ENCODE measurements at regions of chr7 and their contacts with region 1.

Region 1: GRCh38 chr7:140003913-140004382 is 58.8 kb downstream of the PARP12 start:
- DNase-seq: peak; percentile 81 to 84 (median 84)
- ATAC-seq: peak; percentile 73
- H3K4me3 ChIP-seq: no peak overlapping the region
- H3K27ac ChIP-seq: no peak overlapping the region
- H3K4me1 ChIP-seq: peaks cover 10 to 11% of the 10 kb centered on the region in 2 experiments; a peak in 4 of 5 replicates
- H3K27me3 ChIP-seq: peaks cover 0 to 9% of the 10 kb centered on the region in 2 experiments; a peak in 2 of 5 replicates
- CTCF ChIP-seq: peak; percentile 85 to 92 (median 88)
- EP300 ChIP-seq: no peak
- POLR2A ChIP-seq: no peak
- RAD21 ChIP-seq: peak; percentile 83 to 94

Region 2: DNA sequence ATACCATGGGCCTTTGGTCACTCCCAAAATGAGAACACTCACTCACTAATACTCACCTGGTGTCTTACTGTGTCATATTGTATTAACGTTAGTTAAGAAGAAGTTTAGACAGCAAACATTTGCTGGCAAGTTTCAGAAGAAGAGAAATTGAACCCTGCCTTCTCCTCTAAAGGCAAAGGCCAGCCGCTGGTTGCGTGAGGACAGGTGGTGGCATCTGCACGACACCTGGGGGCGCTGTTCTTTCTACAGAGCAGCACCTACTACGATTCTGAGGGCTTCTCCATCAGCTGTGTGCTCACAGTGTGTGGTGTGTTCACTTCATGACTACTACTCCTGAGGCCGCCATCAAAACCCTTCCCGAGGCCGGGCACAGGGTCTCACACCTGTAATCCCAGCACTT is 498.4 kb before region 1 on chr7:
- CTCF ChIA-PET with region 1: interaction called, 16 read pairs
- POLR2A ChIA-PET with region 1: no interaction called
- in situ Hi-C with region 1: loop called (anchors 5 kb)
- intact Hi-C with region 1: loop called (anchors 1 kb)
- DNase-seq: peak; percentile 66 to 76 (median 73)
- ATAC-seq: peak; percentile 95
- H3K4me3 ChIP-seq: no peak overlapping the region
- H3K27ac ChIP-seq: no peak overlapping the region
- H3K4me1 ChIP-seq: peaks cover 2 to 4% of the 10 kb centered on the region in 2 experiments; a peak in 2 of 5 replicates
- H3K27me3 ChIP-seq: peaks cover 24 to 51% of the 10 kb centered on the region in 2 experiments
- CTCF ChIP-seq: peak; percentile 85 to 91 (median 86)
- EP300 ChIP-seq: no peak
- POLR2A ChIP-seq: no peak
- RAD21 ChIP-seq: peak; percentile 29 to 84

Region 3: DNA sequence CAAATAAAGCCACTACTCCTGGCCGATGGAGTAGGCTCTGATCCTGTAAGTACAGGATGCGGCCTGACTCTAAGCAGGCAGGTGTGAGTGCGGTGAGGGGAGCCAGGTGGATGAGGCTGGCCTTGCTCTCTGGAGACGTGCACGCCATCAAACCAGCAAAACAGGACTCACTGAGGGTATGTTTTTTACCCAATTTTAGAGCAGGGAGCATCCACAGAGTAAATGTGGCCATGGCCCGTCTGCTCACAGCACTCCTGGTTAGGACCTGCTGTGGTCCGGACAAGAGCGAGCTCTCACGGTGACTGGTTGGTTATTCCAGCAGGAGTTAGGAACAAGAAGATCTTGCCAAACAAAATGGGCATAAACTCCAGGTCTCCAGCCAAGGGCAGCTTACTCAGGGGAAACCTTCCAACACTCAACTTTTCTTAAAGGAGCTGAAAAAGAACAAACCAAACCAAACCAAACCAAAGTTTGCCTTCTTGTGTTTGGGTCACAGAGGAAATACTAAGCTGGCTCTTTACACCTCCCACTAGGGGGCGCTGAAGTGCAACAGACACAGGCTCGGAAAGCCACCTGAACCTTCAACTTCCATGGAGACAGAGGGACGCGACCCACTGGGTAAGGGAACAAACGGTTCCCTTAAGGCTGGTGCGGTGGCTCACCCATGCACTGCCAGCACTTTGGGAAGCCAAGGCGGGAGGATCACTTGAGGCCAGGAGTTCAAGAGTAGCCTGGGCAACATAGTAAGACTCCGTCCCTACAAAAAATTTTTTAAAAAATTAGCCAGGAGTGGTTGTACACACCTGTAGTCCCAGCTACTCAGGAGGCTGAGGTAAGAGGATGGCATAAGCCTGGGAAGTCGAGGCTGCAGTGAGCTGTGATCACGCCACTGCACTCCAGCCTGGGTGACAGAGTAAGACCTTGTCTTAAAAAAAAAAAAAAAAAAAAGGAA is 358.1 kb before region 1 on chr7:
- CTCF ChIA-PET with region 1: interaction called, 92 read pairs
- POLR2A ChIA-PET with region 1: interaction called, 5 read pairs
- in situ Hi-C with region 1: loop called (anchors 5 kb)
- intact Hi-C with region 1: loop called (anchors 1 kb)
- DNase-seq: peak; percentile 84 to 93 (median 88)
- ATAC-seq: peak; percentile 94
- H3K4me3 ChIP-seq: no peak overlapping the region
- H3K27ac ChIP-seq: no peak overlapping the region
- H3K4me1 ChIP-seq: peaks cover 0 to 3% of the 10 kb centered on the region in 2 experiments; a peak in 2 of 5 replicates
- H3K27me3 ChIP-seq: peaks cover 0 to 3% of the 10 kb centered on the region in 2 experiments; a peak in 1 of 5 replicates
- CTCF ChIP-seq: peak; percentile 93 to 98 (median 98)
- EP300 ChIP-seq: no peak
- POLR2A ChIP-seq: no peak
- RAD21 ChIP-seq: peak; percentile 97 to 98

Region 4: GRCh38 chr7:139827042-139827441 is 176.9 kb before region 1 on chr7:
- CTCF ChIA-PET with region 1: no interaction called
- POLR2A ChIA-PET with region 1: interaction called, 3 read pairs
- in situ Hi-C with region 1: no loop called
- intact Hi-C with region 1: loop called (anchors 5 kb)
- DNase-seq: peak in 1 of 4 experiments; percentile 30
- ATAC-seq: peak; percentile 25; the same call in 1 of the 3 replicates
- H3K4me3 ChIP-seq: no peak overlapping the region
- H3K27ac ChIP-seq: no peak overlapping the region
- H3K4me1 ChIP-seq: peaks cover 4 to 22% of the 10 kb centered on the region in 2 experiments; a peak in 4 of 5 replicates
- H3K27me3 ChIP-seq: peaks cover 37 to 47% of the 10 kb centered on the region in 2 experiments
- CTCF ChIP-seq: peak; percentile 28 to 41 (median 37); a peak in 3 of 6 replicates
- EP300 ChIP-seq: no peak
- POLR2A ChIP-seq: no peak
- RAD21 ChIP-seq: peak in 1 of 2 experiments; percentile 67; a peak in 2 of 4 replicates

Region 5: DNA sequence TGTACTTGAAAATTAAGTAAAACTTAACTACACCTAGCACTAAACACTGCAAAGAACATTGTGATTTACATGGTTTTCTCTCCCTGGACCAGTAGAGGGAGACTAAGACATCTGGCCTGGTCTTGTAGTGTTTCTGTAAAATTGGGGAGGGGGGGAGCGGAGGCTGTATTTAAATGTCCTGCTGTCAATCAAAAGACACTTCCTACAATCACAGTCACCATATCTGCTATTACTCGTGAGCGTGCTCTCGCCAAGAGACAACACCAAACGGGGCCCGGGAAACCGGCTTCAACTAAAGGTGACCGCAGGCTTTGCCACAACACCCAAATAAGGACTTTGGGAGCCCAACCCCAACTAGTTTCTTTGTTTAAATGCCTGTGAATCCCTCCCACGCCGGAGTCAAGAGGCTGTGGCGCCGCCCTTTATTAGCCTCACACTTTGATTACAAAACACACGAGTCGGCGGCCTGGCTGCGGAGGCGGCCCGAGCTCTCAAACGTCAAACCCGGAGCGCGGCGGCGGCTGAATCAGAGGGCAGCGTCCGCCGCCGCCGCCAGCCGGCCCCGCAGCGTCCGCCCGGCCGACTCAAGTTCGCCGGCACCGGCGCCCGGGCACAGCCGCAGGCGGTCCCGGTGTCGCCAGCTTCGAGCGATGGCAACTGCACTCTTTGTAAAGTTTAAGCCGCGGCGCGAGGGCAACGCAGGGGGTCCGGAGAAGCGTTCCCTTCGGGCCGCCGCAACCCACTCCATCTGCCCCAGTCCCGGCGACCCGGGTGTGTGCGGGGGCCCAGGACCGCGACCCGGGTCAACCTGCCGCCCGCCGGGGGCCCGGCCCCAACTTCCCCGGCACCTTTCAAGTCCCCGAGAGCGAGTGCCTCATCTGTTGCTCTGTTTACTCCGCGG is 171.5 kb after region 1 on chr7:
- CTCF ChIA-PET with region 1: no interaction called
- POLR2A ChIA-PET with region 1: interaction called, 3 read pairs
- in situ Hi-C with region 1: no loop called
- intact Hi-C with region 1: loop called (anchors 2 kb)
- DNase-seq: peak; percentile 79 to 95 (median 86)
- ATAC-seq: peak; percentile 72
- H3K4me3 ChIP-seq: peak overlapping the region; percentile 73
- H3K27ac ChIP-seq: peak overlapping the region; percentile 44; the same call in 2 of the 3 replicates
- H3K4me1 ChIP-seq: peaks cover 7 to 24% of the 10 kb centered on the region in 2 experiments
- H3K27me3 ChIP-seq: no peaks in the 10 kb centered on the region
- CTCF ChIP-seq: peak; percentile 86 to 98 (median 95)
- EP300 ChIP-seq: peak; percentile 60; the same call in 1 of the 2 replicates
- POLR2A ChIP-seq: peak; percentile 48; the same call in 1 of the 2 replicates
- RAD21 ChIP-seq: peak; percentile 97 to 98

Region 6: DNA sequence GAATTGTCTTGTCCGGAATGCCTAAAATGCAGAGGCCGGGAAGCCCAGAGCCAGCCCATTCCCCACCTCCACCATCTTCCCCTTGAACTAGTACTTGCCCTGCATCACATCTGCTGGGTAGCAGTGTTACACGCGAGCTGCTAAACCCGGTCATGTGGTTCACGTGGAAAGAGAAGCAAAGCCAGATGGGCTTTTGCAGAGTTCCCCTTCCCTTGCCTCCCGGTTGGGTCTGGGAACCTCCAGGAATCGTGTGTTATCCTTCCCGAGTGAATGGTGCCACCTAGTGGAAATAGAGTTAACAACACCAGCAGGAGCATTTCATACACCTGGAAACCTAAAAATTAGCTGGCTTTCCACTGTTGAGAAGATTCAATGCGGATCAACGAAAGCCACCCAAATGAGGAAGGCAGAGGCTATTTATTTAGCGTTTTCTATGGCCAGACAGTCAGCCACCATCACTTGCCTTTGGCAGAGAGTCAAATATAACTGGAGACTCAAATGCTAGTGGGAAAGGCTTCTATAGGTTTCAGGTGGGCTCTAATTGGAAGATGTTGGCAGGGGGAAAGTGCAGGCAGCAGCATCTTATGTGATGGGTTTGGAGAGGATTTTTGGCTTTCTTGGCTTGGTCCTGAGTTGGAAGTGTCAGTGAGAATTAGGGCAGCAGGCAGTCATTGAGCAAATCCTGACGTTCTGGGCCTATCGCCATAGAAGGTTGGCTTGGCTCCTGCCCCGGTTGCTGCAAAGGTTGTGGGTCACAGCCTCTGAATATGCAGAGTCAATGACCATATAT is 649.6 kb after region 1 on chr7:
- CTCF ChIA-PET with region 1: no interaction called
- POLR2A ChIA-PET with region 1: no interaction called
- in situ Hi-C with region 1: no loop called
- intact Hi-C with region 1: loop called (anchors 5 kb)
- DNase-seq: peak; percentile 77 to 84 (median 81)
- ATAC-seq: peak; percentile 83
- H3K4me3 ChIP-seq: no peak overlapping the region
- H3K27ac ChIP-seq: no peak overlapping the region
- H3K4me1 ChIP-seq: no peaks in the 10 kb centered on the region; a peak in 2 of 5 replicates
- H3K27me3 ChIP-seq: peaks cover 50 to 84% of the 10 kb centered on the region in 2 experiments; a peak in 4 of 5 replicates
- CTCF ChIP-seq: peak; percentile 87 to 98 (median 96)
- EP300 ChIP-seq: 0 out of 2 replicates have a peak, but pooled peaks have one; percentile 9
- POLR2A ChIP-seq: no peak
- RAD21 ChIP-seq: peak; percentile 95 to 96